ENCODE measurements at regions of chr2 and their contacts with region 1.

Region 1: GRCh38 chr2:37389989-37390765 is 45.7 kb downstream of the QPCT start:
- DNase-seq: peak; percentile 14 to 90 (median 45)
- ATAC-seq: peak; percentile 93
- H3K4me3 ChIP-seq: no peak overlapping the region
- H3K4me3 Mint-ChIP-seq: peak overlapping the region; percentile 40
- H3K27ac ChIP-seq: peak overlapping the region; percentile 52 to 64
- H3K27ac Mint-ChIP-seq: no peak overlapping the region
- H3K4me1 ChIP-seq: peaks cover 25% of the 10 kb centered on the region
- H3K4me1 Mint-ChIP-seq: no peaks in the 10 kb centered on the region
- H3K27me3 ChIP-seq: no peaks in the 10 kb centered on the region
- H3K27me3 Mint-ChIP-seq: no peaks in the 10 kb centered on the region
- CTCF ChIP-seq: no peak

Region 2: GRCh38 chr2:37324786-37325624 is 65.2 kb before region 1 on chr2 and contains the start of gene PRKD3:
- CTCF ChIA-PET with region 1: interaction called, 3 read pairs
- POLR2A ChIA-PET with region 1: interaction called, 3 read pairs
- intact Hi-C with region 1: loop called in 1 of 2 experiments (anchors 5 kb)
- DNase-seq: peak in 10 of 14 experiments; percentile 20 to 82 (median 48)
- ATAC-seq: peak; percentile 59
- H3K4me3 ChIP-seq: peak within 1 kb of the TSS; percentile 86
- H3K4me3 Mint-ChIP-seq: peak within 1 kb of the TSS; percentile 100
- H3K27ac ChIP-seq: peak within 1 kb of the TSS; percentile 34 to 56
- H3K27ac Mint-ChIP-seq: peak within 1 kb of the TSS; percentile 97
- H3K4me1 ChIP-seq: peaks cover 23% of the 10 kb centered on the region
- H3K4me1 Mint-ChIP-seq: peaks cover 41% of the 10 kb centered on the region
- H3K27me3 ChIP-seq: peaks cover 0 to 5% of the 10 kb centered on the region in 2 experiments
- H3K27me3 Mint-ChIP-seq: peaks cover 12% of the 10 kb centered on the region
- CTCF ChIP-seq: no peak
- total RNA-seq, gene PRKD3: 40.5 to 44.1 TPM

Region 3: DNA sequence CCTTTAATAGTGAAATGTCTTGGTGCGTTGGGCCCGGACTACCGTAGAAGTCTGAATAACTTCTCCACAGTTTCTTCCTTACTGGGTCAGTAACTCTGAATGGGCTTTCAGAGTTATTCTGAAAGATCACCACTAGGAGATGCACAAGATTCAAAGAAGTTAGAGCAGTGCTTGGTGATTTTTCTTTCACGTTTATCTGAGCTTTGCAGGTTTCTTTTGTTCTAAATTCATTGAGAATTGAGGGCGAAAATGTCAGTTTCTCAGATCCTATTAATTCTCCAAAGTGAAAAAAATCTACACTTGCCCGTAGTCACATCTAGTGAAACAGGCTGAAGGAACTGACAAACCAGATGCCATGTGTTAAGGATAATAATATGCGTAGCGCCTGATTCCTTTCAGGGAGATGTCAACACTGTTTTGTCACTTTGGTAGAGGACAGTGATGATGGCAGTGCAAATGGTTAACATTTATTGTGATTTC is 24.3 kb after region 1 on chr2:
- CTCF ChIA-PET with region 1: interaction called, 20 read pairs
- POLR2A ChIA-PET with region 1: no interaction called
- intact Hi-C with region 1: no loop called
- DNase-seq: peak in 3 of 14 experiments; percentile 68 to 73 (median 71)
- ATAC-seq: peak; percentile 68
- H3K4me3 ChIP-seq: no peak overlapping the region
- H3K4me3 Mint-ChIP-seq: no peak overlapping the region
- H3K27ac ChIP-seq: no peak overlapping the region
- H3K27ac Mint-ChIP-seq: no peak overlapping the region
- H3K4me1 ChIP-seq: peaks cover 7% of the 10 kb centered on the region
- H3K4me1 Mint-ChIP-seq: peaks cover 13% of the 10 kb centered on the region
- H3K27me3 ChIP-seq: no peaks in the 10 kb centered on the region
- H3K27me3 Mint-ChIP-seq: no peaks in the 10 kb centered on the region
- CTCF ChIP-seq: peak; percentile 84

Region 4: GRCh38 chr2:37890893-37891495 is 500.8 kb after region 1 on chr2:
- CTCF ChIA-PET with region 1: no interaction called
- POLR2A ChIA-PET with region 1: no interaction called
- intact Hi-C with region 1: loop called in 1 of 2 experiments (anchors 5 kb)
- DNase-seq: peak; percentile 39 to 78 (median 57)
- ATAC-seq: peak; percentile 65
- H3K4me3 ChIP-seq: no peak overlapping the region
- H3K4me3 Mint-ChIP-seq: no peak overlapping the region
- H3K27ac ChIP-seq: no peak overlapping the region
- H3K27ac Mint-ChIP-seq: no peak overlapping the region
- H3K4me1 ChIP-seq: peaks cover 40% of the 10 kb centered on the region
- H3K4me1 Mint-ChIP-seq: peaks cover 51% of the 10 kb centered on the region
- H3K27me3 ChIP-seq: peaks cover 0 to 4% of the 10 kb centered on the region in 2 experiments
- H3K27me3 Mint-ChIP-seq: peaks cover 2% of the 10 kb centered on the region
- CTCF ChIP-seq: peak; percentile 79

Region 5: DNA sequence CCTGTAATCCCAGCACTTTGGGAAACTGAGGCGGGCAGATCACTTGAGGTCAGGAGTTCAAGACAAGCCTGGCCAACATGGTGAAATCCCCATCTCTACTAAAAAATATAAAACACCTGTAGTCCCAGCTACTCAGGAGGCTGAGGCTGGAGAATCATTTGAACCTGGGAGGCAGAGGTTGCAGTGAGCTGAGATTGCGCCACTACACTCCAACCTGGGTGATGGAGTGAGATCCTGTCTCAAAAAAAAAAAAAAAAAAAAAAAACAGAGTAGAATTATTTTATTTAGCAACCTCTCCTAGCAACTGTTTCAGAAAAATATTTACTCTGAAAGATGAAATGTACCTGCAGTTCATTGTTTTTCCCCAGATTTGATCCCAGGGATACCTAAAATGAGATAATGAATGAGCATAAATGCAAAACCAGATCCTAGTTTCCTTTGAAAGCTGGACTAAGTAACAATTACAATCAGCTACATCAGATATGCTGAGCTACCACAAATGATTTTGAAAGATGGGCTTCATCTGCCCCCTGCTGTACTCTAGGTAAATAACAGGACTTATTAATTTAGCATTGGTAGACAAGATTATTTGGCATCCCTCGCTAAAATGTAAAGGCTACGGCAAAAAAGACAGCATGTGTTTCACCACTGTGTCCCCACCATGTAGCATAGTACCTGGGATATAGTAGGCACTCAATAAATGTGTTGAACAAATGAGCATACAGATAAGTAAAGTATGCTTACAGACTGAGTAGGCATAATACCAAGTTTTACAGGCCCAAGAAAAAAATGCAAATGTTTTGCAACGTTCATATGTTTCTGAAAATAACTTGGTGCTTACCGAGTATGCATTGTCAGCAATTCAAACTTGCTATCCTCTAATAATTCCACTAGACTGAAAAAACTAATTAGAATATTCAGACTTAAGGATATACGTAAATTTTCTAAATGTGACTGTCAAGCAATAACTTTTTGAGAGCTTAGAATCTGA is 884.4 kb after region 1 on chr2:
- CTCF ChIA-PET with region 1: no interaction called
- POLR2A ChIA-PET with region 1: no interaction called
- intact Hi-C with region 1: loop called (anchors 5 kb)
- DNase-seq: peak in 6 of 14 experiments; percentile 9 to 71 (median 47)
- ATAC-seq: peak; percentile 57
- H3K4me3 ChIP-seq: no peak overlapping the region
- H3K4me3 Mint-ChIP-seq: no peak overlapping the region
- H3K27ac ChIP-seq: no peak overlapping the region
- H3K27ac Mint-ChIP-seq: no peak overlapping the region
- H3K4me1 ChIP-seq: no peaks in the 10 kb centered on the region
- H3K4me1 Mint-ChIP-seq: no peaks in the 10 kb centered on the region
- H3K27me3 ChIP-seq: no peaks in the 10 kb centered on the region
- H3K27me3 Mint-ChIP-seq: no peaks in the 10 kb centered on the region
- CTCF ChIP-seq: peak; percentile 57